Caco-2 (cell line): ENCODE measurements at regions of chr3 and their contacts with region 1.

Region 1: DNA sequence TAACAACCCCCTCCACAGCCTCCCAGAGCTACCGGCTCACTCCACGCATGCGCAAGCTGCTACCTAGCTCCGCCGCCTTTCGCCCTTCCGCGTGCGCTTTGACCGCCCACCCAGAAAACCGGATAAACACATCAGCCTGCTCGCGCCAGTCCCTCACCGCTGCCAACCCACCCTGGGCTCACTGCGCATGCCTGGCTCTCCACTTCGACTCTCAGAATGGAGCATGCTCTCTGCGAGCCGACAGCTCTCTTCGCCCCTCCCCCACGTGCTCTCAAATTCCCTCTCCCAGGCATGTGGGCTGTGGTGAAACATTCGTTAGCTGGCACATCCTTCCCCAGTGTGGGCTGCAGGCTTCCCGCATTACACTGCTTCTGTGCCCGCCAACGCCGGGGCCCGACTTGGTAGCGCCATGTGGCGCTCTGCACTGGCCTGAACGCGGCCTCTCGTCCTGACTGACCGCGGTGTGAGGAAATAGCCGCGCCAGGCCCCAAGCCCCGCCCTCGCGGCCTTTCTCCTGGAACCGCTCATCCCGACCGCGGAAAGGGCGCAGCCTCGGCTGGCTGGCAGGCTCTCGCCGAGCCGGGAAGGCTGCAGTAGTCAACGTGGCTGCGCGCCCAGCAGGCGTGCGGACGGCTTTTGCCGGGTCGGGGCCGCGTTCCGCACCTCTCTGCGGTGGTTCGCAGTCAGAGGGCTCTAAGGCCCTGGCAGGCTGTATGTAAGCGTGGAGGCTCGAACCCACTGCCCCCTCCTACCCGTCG is 445 bp upstream of the MSL2 start:
- DNase-seq: peak; percentile 98 to 99
- H3K4me3 ChIP-seq: peak overlapping the region; percentile 75
- H3K4me3 Mint-ChIP-seq: peak overlapping the region; percentile 86
- H3K27ac Mint-ChIP-seq: peak overlapping the region; percentile 98
- H3K4me1 ChIP-seq: peaks cover 12% of the 10 kb centered on the region; the same call in 1 of the 2 replicates
- H3K4me1 Mint-ChIP-seq: no peaks in the 10 kb centered on the region
- H3K27me3 ChIP-seq: no peaks in the 10 kb centered on the region
- H3K27me3 Mint-ChIP-seq: no peaks in the 10 kb centered on the region
- CTCF ChIP-seq: no peak

Region 2: GRCh38 chr3:136022529-136023263 is 173.9 kb before region 1 on chr3:
- CTCF ChIA-PET with region 1: no interaction called
- POLR2A ChIA-PET with region 1: interaction called, 12 read pairs
- intact Hi-C with region 1: no loop called
- DNase-seq: peak in 1 of 2 experiments; percentile 18
- H3K4me3 ChIP-seq: no peak overlapping the region
- H3K4me3 Mint-ChIP-seq: peak overlapping the region; percentile 65
- H3K27ac Mint-ChIP-seq: peak overlapping the region; percentile 59
- H3K4me1 ChIP-seq: peaks cover 18% of the 10 kb centered on the region
- H3K4me1 Mint-ChIP-seq: peaks cover 16% of the 10 kb centered on the region
- H3K27me3 ChIP-seq: no peaks in the 10 kb centered on the region
- H3K27me3 Mint-ChIP-seq: no peaks in the 10 kb centered on the region
- CTCF ChIP-seq: no peak

Region 3: GRCh38 chr3:136149667-136150066 is 46.9 kb before region 1 on chr3:
- CTCF ChIA-PET with region 1: no interaction called
- POLR2A ChIA-PET with region 1: no interaction called
- intact Hi-C with region 1: loop called (anchors 1 kb)
- DNase-seq: no peak
- H3K4me3 ChIP-seq: no peak overlapping the region
- H3K4me3 Mint-ChIP-seq: no peak overlapping the region
- H3K27ac Mint-ChIP-seq: no peak overlapping the region
- H3K4me1 ChIP-seq: peaks cover 22% of the 10 kb centered on the region
- H3K4me1 Mint-ChIP-seq: peaks cover 29% of the 10 kb centered on the region
- H3K27me3 ChIP-seq: no peaks in the 10 kb centered on the region
- H3K27me3 Mint-ChIP-seq: no peaks in the 10 kb centered on the region
- CTCF ChIP-seq: no peak

Region 4: GRCh38 chr3:136239094-136239493 is 42.5 kb after region 1 on chr3:
- CTCF ChIA-PET with region 1: no interaction called
- POLR2A ChIA-PET with region 1: interaction called, 6 read pairs
- intact Hi-C with region 1: loop called (anchors 1 kb)
- DNase-seq: peak in 1 of 2 experiments; percentile 40
- H3K4me3 ChIP-seq: no peak overlapping the region
- H3K4me3 Mint-ChIP-seq: no peak overlapping the region
- H3K27ac Mint-ChIP-seq: no peak overlapping the region
- H3K4me1 ChIP-seq: peaks cover 14% of the 10 kb centered on the region
- H3K4me1 Mint-ChIP-seq: peaks cover 15% of the 10 kb centered on the region
- H3K27me3 ChIP-seq: no peaks in the 10 kb centered on the region
- H3K27me3 Mint-ChIP-seq: no peaks in the 10 kb centered on the region
- CTCF ChIP-seq: no peak

Region 5: GRCh38 chr3:136327671-136328070 is 131.1 kb after region 1 on chr3:
- CTCF ChIA-PET with region 1: no interaction called
- POLR2A ChIA-PET with region 1: interaction called, 12 read pairs
- intact Hi-C with region 1: no loop called
- DNase-seq: no peak
- H3K4me3 ChIP-seq: no peak overlapping the region
- H3K4me3 Mint-ChIP-seq: no peak overlapping the region
- H3K27ac Mint-ChIP-seq: no peak overlapping the region
- H3K4me1 ChIP-seq: no peaks in the 10 kb centered on the region
- H3K4me1 Mint-ChIP-seq: no peaks in the 10 kb centered on the region
- H3K27me3 ChIP-seq: no peaks in the 10 kb centered on the region
- H3K27me3 Mint-ChIP-seq: no peaks in the 10 kb centered on the region
- CTCF ChIP-seq: no peak